ENCODE measurements at regions of chr14 and their contacts with region 1.

Region 1: DNA sequence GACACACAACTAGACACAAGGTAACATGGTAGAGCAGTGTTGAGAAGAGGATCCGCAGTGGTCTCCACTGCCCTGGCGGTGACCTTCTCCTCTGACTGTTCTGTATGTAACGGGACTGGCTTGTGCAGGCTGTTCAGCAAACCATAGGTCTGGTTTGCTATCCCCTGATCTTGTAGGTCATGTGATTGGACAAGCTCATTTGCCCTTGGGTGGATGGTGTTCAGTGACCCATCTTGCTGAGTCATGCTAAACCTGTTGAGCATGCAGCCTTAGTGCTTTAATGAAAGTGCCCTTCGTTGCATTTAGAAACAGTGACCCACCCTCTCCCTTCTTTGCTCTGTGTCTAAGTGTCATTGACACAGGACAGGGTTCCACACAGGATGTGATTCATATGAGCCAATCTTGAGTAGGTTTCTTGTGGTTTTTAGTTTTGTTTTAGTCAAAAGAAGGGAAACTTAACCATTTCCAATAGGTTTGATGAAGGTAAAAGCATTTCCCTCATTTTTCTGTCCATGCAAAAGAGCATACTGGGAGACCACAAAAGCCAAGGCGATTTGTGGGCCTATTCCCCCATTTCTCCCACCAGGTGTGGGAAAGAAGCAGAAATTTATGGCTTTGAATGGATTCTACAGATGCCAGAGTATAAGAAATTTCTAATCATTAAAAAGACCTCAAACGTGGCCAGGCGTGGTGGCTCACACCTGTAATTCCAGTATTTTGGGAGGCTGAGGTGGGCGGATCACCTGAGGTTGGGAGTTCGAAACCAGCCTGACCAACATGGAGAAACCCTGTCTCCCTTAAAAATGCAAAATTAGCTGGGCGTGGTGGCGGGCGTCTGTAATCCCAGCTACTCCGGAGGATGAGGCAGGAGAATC is 32.6 kb upstream of the HIF1A start:
- DNase-seq: peak in 8 of 9 donors; percentile 23 to 56 (median 46)
- ATAC-seq: peak; percentile 91
- H3K4me3 ChIP-seq: peak overlapping the region; percentile 26
- H3K4me3 Mint-ChIP-seq: peak overlapping the region; percentile 49 to 91 (median 79)
- H3K27ac ChIP-seq: peak overlapping the region; percentile 54
- H3K27ac Mint-ChIP-seq: peak overlapping the region; percentile 70 to 96 (median 89)
- H3K4me1 ChIP-seq: peaks cover 40 to 65% of the 10 kb centered on the region in 2 donors
- H3K4me1 Mint-ChIP-seq: peaks cover 45 to 68% (median 63%) of the 10 kb centered on the region in 7 donors
- H3K27me3 ChIP-seq: no peaks in the 10 kb centered on the region
- H3K27me3 Mint-ChIP-seq: no peaks in the 10 kb centered on the region

Region 2: DNA sequence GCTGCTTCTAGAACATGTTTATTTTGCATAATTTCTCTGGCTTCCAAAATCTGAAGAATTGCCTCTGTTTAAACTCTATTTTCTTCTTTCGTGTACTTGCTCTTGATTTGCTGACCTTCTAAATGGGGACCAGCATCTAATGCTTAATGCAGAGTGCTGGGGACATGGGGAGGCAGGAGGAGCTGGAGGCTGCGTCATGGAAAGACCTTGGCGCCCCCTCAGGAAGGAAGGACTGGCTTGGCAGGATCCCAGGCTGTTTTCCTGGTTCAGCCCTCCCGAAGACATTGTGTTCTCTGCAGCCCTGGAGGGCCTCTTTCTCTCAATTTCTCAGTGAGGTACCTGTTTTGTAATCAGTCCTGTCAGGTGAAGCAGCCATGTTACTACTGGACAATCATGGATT is 335.8 kb before region 1 on chr14:
- CTCF ChIA-PET with region 1: no interaction called
- POLR2A ChIA-PET with region 1: no interaction called
- intact Hi-C with region 1: loop called in 1 of 2 experiments (anchors 5 kb)
- DNase-seq: no peak
- ATAC-seq: no peak
- H3K4me3 ChIP-seq: peak overlapping the region; percentile 90
- H3K4me3 Mint-ChIP-seq: peak overlapping the region in 9 of 10 donors; percentile 75 to 99 (median 98)
- H3K27ac ChIP-seq: peak overlapping the region; percentile 91
- H3K27ac Mint-ChIP-seq: peak overlapping the region in 8 of 9 donors; percentile 78 to 99 (median 89)
- H3K4me1 ChIP-seq: peaks cover 37 to 60% of the 10 kb centered on the region in 2 donors
- H3K4me1 Mint-ChIP-seq: peaks cover 40 to 71% (median 64%) of the 10 kb centered on the region in 7 donors
- H3K27me3 ChIP-seq: no peaks in the 10 kb centered on the region
- H3K27me3 Mint-ChIP-seq: no peaks in the 10 kb centered on the region

Region 3: GRCh38 chr14:61503167-61503801 is 159.4 kb before region 1 on chr14:
- CTCF ChIA-PET with region 1: no interaction called
- POLR2A ChIA-PET with region 1: no interaction called
- intact Hi-C with region 1: loop called in 1 of 2 experiments (anchors 1 kb)
- DNase-seq: peak in 8 of 9 donors; percentile 57 to 83 (median 67)
- ATAC-seq: peak; percentile 91
- H3K4me3 ChIP-seq: peak overlapping the region; percentile 25
- H3K4me3 Mint-ChIP-seq: peak overlapping the region; percentile 58 to 88 (median 80)
- H3K27ac ChIP-seq: peak overlapping the region; percentile 78
- H3K27ac Mint-ChIP-seq: peak overlapping the region in 6 of 9 donors; percentile 92 to 99 (median 97)
- H3K4me1 ChIP-seq: peaks cover 56 to 85% of the 10 kb centered on the region in 2 donors
- H3K4me1 Mint-ChIP-seq: peaks cover 78 to 100% (median 93%) of the 10 kb centered on the region in 7 donors
- H3K27me3 ChIP-seq: no peaks in the 10 kb centered on the region
- H3K27me3 Mint-ChIP-seq: no peaks in the 10 kb centered on the region

Region 4: GRCh38 chr14:61525293-61526011 is 137.2 kb before region 1 on chr14:
- CTCF ChIA-PET with region 1: no interaction called
- POLR2A ChIA-PET with region 1: no interaction called
- intact Hi-C with region 1: loop called in 1 of 2 experiments (anchors 5 kb)
- DNase-seq: peak in 1 of 9 donors; percentile 69
- ATAC-seq: peak; percentile 74
- H3K4me3 ChIP-seq: no peak overlapping the region
- H3K4me3 Mint-ChIP-seq: peak overlapping the region in 3 of 10 donors; percentile 2 to 73 (median 63)
- H3K27ac ChIP-seq: peak overlapping the region; percentile 34
- H3K27ac Mint-ChIP-seq: peak overlapping the region; percentile 69 to 90 (median 81)
- H3K4me1 ChIP-seq: peaks cover 22 to 68% of the 10 kb centered on the region in 2 donors
- H3K4me1 Mint-ChIP-seq: peaks cover 43 to 86% (median 73%) of the 10 kb centered on the region in 7 donors
- H3K27me3 ChIP-seq: no peaks in the 10 kb centered on the region
- H3K27me3 Mint-ChIP-seq: no peaks in the 10 kb centered on the region

Region 5: DNA sequence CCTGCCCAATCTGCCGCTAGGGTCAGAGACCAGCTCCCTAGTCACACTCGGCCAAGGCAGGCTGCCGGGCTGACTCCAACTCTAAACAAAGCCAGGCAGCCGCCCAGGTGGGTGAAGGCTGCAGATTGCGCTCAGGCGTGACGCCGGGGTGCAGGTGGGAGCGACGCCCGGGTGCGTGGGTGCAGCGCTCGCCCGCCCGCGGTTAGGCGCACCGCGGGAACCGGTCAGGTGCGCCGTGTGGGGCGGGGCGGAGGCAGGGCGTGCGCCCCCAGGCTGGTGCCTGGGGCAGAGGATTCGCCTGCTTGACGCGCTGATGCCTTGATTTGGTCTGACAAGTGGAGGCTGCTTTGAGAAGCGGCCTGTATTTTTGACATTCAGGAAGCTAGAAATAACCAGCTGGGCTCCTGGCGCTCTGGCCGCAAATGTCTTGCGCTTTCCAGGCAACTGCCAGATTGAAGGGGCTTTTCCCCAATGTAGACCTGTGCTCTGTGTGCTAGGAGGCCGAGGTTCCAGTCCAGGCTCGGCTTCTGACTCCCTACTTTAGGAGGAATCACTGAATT is 94.0 kb before region 1 on chr14:
- CTCF ChIA-PET with region 1: no interaction called
- POLR2A ChIA-PET with region 1: no interaction called
- intact Hi-C with region 1: loop called in 1 of 2 experiments (anchors 5 kb)
- DNase-seq: peak; percentile 49 to 77 (median 73)
- ATAC-seq: peak; percentile 86
- H3K4me3 ChIP-seq: peak overlapping the region; percentile 47
- H3K4me3 Mint-ChIP-seq: peak overlapping the region; percentile 74 to 89 (median 82)
- H3K27ac ChIP-seq: peak overlapping the region; percentile 26
- H3K27ac Mint-ChIP-seq: peak overlapping the region; percentile 44 to 95 (median 86)
- H3K4me1 ChIP-seq: peaks cover 0 to 34% of the 10 kb centered on the region in 2 donors
- H3K4me1 Mint-ChIP-seq: peaks cover 40 to 77% (median 57%) of the 10 kb centered on the region in 7 donors
- H3K27me3 ChIP-seq: no peaks in the 10 kb centered on the region
- H3K27me3 Mint-ChIP-seq: peaks cover 0 to 10% (median 0%) of the 10 kb centered on the region in 5 donors

Region 6: DNA sequence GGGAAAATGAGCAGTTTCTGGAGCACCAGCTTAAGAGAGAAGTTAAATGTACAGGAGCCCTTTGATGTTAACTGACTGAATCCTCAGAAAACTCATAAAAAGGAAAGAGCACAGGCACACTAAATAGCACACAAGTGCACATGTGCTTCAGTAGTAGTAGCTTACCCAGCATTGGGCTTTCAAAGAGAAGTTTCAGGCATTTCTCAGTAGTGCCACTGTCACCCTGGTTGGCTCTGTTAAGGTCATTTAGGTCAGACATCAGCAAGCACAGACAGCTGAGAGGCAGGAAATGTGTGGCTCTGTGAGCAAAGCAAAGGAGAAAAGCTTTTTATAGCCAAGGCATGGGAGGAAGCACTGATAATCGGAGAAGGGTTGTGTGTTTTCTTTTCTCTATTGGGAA is 63.7 kb before region 1 on chr14:
- CTCF ChIA-PET with region 1: no interaction called
- POLR2A ChIA-PET with region 1: no interaction called
- intact Hi-C with region 1: loop called in 1 of 2 experiments (anchors 1 kb)
- DNase-seq: peak in 3 of 9 donors; percentile 10 to 15 (median 15)
- ATAC-seq: no peak
- H3K4me3 ChIP-seq: no peak overlapping the region
- H3K4me3 Mint-ChIP-seq: peak overlapping the region in 4 of 10 donors; percentile 27 to 55 (median 39)
- H3K27ac ChIP-seq: no peak overlapping the region
- H3K27ac Mint-ChIP-seq: peak overlapping the region in 3 of 9 donors; percentile 53 to 84 (median 71)
- H3K4me1 ChIP-seq: peaks cover 4 to 11% of the 10 kb centered on the region in 2 donors
- H3K4me1 Mint-ChIP-seq: peaks cover 16 to 42% (median 31%) of the 10 kb centered on the region in 7 donors
- H3K27me3 ChIP-seq: no peaks in the 10 kb centered on the region
- H3K27me3 Mint-ChIP-seq: no peaks in the 10 kb centered on the region

Region 7: GRCh38 chr14:61644834-61645233 is 17.8 kb before region 1 on chr14:
- CTCF ChIA-PET with region 1: no interaction called
- POLR2A ChIA-PET with region 1: interaction called, 5 read pairs
- intact Hi-C with region 1: loop called (anchors 1 kb)
- DNase-seq: peak in 1 of 9 donors; percentile 18
- ATAC-seq: no peak
- H3K4me3 ChIP-seq: no peak overlapping the region
- H3K4me3 Mint-ChIP-seq: no peak overlapping the region
- H3K27ac ChIP-seq: no peak overlapping the region
- H3K27ac Mint-ChIP-seq: peak overlapping the region in 2 of 9 donors; percentile 17 to 38
- H3K4me1 ChIP-seq: peaks cover 8 to 16% of the 10 kb centered on the region in 2 donors
- H3K4me1 Mint-ChIP-seq: peaks cover 18 to 57% (median 33%) of the 10 kb centered on the region in 7 donors
- H3K27me3 ChIP-seq: no peaks in the 10 kb centered on the region
- H3K27me3 Mint-ChIP-seq: peaks cover 0 to 2% (median 0%) of the 10 kb centered on the region in 5 donors

Region 8: DNA sequence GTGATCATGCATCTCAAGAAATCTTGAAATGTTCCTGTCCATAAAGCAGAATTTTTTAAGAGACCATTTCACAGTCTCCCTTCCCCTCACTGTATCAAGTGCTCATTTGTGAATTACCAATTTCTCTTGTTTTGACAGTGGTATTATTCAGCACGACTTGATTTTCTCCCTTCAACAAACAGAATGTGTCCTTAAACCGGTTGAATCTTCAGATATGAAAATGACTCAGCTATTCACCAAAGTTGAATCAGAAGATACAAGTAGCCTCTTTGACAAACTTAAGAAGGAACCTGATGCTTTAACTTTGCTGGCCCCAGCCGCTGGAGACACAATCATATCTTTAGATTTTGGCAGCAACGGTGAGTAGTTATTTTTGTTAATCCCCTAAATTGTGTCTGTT is 74.1 kb after region 1 on chr14:
- CTCF ChIA-PET with region 1: no interaction called
- POLR2A ChIA-PET with region 1: no interaction called
- intact Hi-C with region 1: no loop called
- DNase-seq: no peak
- ATAC-seq: no peak
- H3K4me3 ChIP-seq: no peak overlapping the region
- H3K4me3 Mint-ChIP-seq: no peak overlapping the region
- H3K27ac ChIP-seq: no peak overlapping the region
- H3K27ac Mint-ChIP-seq: peak overlapping the region in 3 of 9 donors; percentile 46 to 59 (median 56)
- H3K4me1 ChIP-seq: no peaks in the 10 kb centered on the region
- H3K4me1 Mint-ChIP-seq: peaks cover 0 to 50% (median 4%) of the 10 kb centered on the region in 7 donors
- H3K27me3 ChIP-seq: no peaks in the 10 kb centered on the region
- H3K27me3 Mint-ChIP-seq: no peaks in the 10 kb centered on the region

Region 9: GRCh38 chr14:61750708-61751474 is 88.2 kb after region 1 on chr14:
- CTCF ChIA-PET with region 1: no interaction called
- POLR2A ChIA-PET with region 1: no interaction called
- intact Hi-C with region 1: no loop called
- DNase-seq: peak; percentile 53 to 89 (median 66)
- ATAC-seq: peak; percentile 92
- H3K4me3 ChIP-seq: peak overlapping the region; percentile 55
- H3K4me3 Mint-ChIP-seq: peak overlapping the region; percentile 75 to 94 (median 85)
- H3K27ac ChIP-seq: peak overlapping the region; percentile 75
- H3K27ac Mint-ChIP-seq: peak overlapping the region; percentile 26 to 88 (median 70)
- H3K4me1 ChIP-seq: no peaks in the 10 kb centered on the region
- H3K4me1 Mint-ChIP-seq: peaks cover 4 to 63% (median 11%) of the 10 kb centered on the region in 7 donors
- H3K27me3 ChIP-seq: no peaks in the 10 kb centered on the region
- H3K27me3 Mint-ChIP-seq: peaks cover 0 to 8% (median 1%) of the 10 kb centered on the region in 5 donors

Measured in naive thymus-derived CD4-positive, alpha-beta T cell (primary cell).